Calu3 (cell line): ENCODE measurements at regions of chr11 and their contacts with region 1.

Region 1: GRCh38 chr11:60363542-60364510 is 14.5 kb upstream of the MS4A7 start:
- DNase-seq: peak; percentile 61
- H3K4me3 Mint-ChIP-seq: no peak overlapping the region
- H3K27ac Mint-ChIP-seq: no peak overlapping the region
- H3K4me1 Mint-ChIP-seq: no peaks in the 10 kb centered on the region
- H3K27me3 Mint-ChIP-seq: peaks cover 23% of the 10 kb centered on the region
- CTCF ChIP-seq: peak; percentile 57

Region 2: GRCh38 chr11:60318726-60319125 is 45.1 kb before region 1 on chr11:
- CTCF ChIA-PET with region 1: no interaction called
- intact Hi-C with region 1: no loop called
- DNase-seq: no peak
- H3K4me3 Mint-ChIP-seq: no peak overlapping the region
- H3K27ac Mint-ChIP-seq: no peak overlapping the region
- H3K4me1 Mint-ChIP-seq: no peaks in the 10 kb centered on the region
- H3K27me3 Mint-ChIP-seq: no peaks in the 10 kb centered on the region
- CTCF ChIP-seq: no peak

Region 3: DNA sequence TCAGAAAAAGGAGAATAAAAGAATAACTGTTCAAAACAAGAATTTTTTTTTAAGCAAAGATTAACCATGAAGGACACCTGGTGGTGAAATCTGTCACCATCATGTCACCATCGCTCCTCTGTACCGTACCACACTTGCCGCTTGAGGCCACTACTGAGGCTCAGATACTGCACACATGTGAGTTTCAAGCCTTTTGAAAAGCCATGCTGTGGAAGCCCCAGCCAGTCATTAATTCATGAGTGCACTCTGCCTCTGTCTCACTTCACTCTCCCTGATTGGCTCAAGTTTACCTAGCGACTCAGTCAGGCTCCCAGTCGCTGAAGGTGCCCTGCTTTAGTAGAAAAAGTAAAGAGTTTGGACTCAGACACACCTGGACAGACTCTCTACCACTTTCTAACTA is 122.2 kb after region 1 on chr11:
- CTCF ChIA-PET with region 1: interaction called, 9 read pairs
- intact Hi-C with region 1: loop called (anchors 1 kb)
- DNase-seq: peak; percentile 67
- H3K4me3 Mint-ChIP-seq: no peak overlapping the region
- H3K27ac Mint-ChIP-seq: no peak overlapping the region
- H3K4me1 Mint-ChIP-seq: no peaks in the 10 kb centered on the region
- H3K27me3 Mint-ChIP-seq: no peaks in the 10 kb centered on the region
- CTCF ChIP-seq: peak; percentile 82

Region 4: DNA sequence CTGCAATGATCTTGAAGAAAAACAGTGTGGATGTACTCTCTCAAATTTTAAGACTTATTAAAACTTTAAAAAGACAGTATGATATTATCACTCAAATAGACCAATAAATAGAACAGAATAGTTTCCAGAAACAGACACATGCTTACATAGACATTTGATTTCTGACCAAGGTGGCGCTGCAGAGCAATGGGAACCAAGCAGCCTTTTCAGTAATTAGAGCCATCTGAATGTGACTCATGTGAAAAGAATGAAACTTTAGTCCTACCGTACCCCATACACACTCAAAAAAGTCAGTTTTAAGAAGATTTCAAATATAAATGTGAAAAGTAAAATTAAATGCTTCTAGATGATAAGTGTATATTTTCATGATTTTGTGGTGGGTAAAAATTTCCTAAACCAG is 261.4 kb after region 1 on chr11:
- CTCF ChIA-PET with region 1: interaction called, 13 read pairs
- intact Hi-C with region 1: no loop called
- DNase-seq: peak; percentile 10
- H3K4me3 Mint-ChIP-seq: no peak overlapping the region
- H3K27ac Mint-ChIP-seq: no peak overlapping the region
- H3K4me1 Mint-ChIP-seq: no peaks in the 10 kb centered on the region
- H3K27me3 Mint-ChIP-seq: no peaks in the 10 kb centered on the region
- CTCF ChIP-seq: no peak